AG04450 (cell line): ENCODE measurements at regions of chr4 and their contacts with region 1.

Region 1: GRCh38 chr4:85747882-85748491 is 273.0 kb downstream of the ARHGAP24 start:
- DNase-seq: peak; percentile 50
- H3K4me3 ChIP-seq: no peak overlapping the region
- H3K27ac ChIP-seq: no peak overlapping the region
- H3K27me3 ChIP-seq: no peaks in the 10 kb centered on the region
- CTCF ChIP-seq: peak; percentile 92

Region 2: DNA sequence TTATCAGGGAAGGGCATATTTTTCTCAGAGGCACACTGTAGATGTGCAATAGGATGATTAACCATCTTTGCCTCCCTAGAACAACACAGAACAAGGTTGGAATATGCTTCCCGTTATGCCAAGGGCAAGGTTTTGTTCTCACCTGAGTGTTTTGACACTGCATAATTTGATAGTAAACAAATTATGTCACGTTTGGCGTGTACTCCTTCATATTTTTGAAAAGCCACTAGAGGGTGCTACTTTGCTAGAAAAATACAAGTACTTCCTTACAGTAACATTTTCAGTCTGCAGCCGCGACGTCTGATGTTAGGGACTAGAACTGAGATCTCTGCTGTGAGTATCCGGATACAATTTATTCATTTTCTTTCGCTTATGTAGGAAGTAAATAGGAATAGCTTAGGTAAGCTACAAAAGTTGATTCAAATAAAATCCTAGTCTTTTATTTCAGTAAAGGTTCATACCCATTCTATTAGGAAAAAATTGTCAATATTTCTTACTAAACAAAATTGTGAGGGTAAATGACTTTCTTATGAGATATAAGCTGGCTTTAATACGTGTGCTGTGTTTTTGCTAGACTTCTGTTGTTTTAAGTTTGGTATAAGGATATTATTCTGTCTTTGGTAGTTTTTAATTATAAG is 600.4 kb before region 1 on chr4:
- CTCF ChIA-PET with region 1: interaction called, 86 read pairs
- POLR2A ChIA-PET with region 1: no interaction called
- DNase-seq: peak; percentile 6
- H3K4me3 ChIP-seq: no peak overlapping the region
- H3K27ac ChIP-seq: no peak overlapping the region
- H3K27me3 ChIP-seq: no peaks in the 10 kb centered on the region
- CTCF ChIP-seq: peak; percentile 70

Region 3: GRCh38 chr4:85318415-85318814 is 429.6 kb before region 1 on chr4:
- CTCF ChIA-PET with region 1: no interaction called
- POLR2A ChIA-PET with region 1: no interaction called
- DNase-seq: no peak
- H3K4me3 ChIP-seq: no peak overlapping the region
- H3K27ac ChIP-seq: no peak overlapping the region
- H3K27me3 ChIP-seq: no peaks in the 10 kb centered on the region
- CTCF ChIP-seq: no peak

Region 4: DNA sequence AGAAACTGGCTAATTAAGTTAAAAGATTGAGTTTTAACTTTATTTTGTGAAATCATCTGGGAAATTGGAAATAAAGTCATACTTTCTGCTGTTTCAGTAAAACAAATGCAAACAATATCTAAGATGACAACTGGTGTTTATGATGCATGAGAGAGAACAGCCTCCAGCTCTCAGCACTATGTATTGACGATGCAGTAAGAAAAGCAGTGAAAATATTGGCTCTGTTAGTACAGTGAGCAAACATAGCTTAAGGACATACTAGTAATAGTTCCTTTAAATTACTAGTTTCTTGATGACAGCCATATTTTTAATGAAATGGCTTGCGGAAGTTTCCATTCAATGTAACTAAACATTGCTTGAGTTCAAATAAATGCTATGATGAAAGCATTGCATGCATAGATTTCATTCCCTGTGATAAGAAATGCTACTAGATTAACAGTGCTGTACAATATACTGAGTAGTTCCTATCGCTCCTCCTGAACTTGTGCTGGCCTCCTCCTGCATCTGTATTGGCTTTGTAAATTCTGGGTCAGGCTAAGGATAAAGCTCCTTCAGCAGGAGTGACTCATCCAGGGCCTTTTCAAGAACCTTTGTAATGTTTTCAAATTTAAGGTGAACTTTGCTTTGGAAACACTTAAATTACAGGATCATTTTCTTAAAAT is 261.4 kb before region 1 on chr4:
- CTCF ChIA-PET with region 1: no interaction called
- POLR2A ChIA-PET with region 1: no interaction called
- DNase-seq: no peak
- H3K4me3 ChIP-seq: no peak overlapping the region
- H3K27ac ChIP-seq: no peak overlapping the region
- H3K27me3 ChIP-seq: no peaks in the 10 kb centered on the region
- CTCF ChIP-seq: no peak

Region 5: GRCh38 chr4:85761803-85762528 is 14.0 kb after region 1 on chr4:
- CTCF ChIA-PET with region 1: interaction called, 55 read pairs
- POLR2A ChIA-PET with region 1: no interaction called
- DNase-seq: peak; percentile 52
- H3K4me3 ChIP-seq: peak overlapping the region; percentile 11; the same call in 1 of the 2 replicates
- H3K27ac ChIP-seq: peak overlapping the region; percentile 79
- H3K27me3 ChIP-seq: no peaks in the 10 kb centered on the region
- CTCF ChIP-seq: no peak

Region 6: GRCh38 chr4:85792376-85793232 is 44.6 kb after region 1 on chr4:
- CTCF ChIA-PET with region 1: interaction called, 17 read pairs
- POLR2A ChIA-PET with region 1: no interaction called
- DNase-seq: no peak
- H3K4me3 ChIP-seq: no peak overlapping the region
- H3K27ac ChIP-seq: no peak overlapping the region
- H3K27me3 ChIP-seq: no peaks in the 10 kb centered on the region
- CTCF ChIP-seq: no peak

Region 7: DNA sequence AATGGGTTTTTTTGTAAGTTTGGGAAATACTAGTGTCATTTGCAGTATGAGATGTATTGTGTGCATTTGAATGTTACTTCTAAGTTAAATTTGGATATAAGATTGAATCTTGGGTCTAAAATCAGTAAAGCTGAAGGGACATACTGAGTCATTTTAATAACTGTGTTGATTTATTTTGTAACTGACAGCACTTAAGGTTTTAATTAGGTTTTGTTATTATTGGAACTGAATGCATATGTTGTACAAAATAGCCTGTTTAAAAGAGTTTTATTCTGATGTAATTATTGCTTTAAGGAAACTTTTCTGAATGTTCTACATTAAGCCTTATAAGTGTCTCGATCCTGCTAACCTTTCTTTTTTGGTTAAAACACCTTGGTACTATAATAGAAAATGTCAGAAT is 215.2 kb after region 1 on chr4:
- CTCF ChIA-PET with region 1: interaction called, 29 read pairs
- POLR2A ChIA-PET with region 1: no interaction called
- DNase-seq: no peak
- H3K4me3 ChIP-seq: no peak overlapping the region
- H3K27ac ChIP-seq: no peak overlapping the region
- H3K27me3 ChIP-seq: no peaks in the 10 kb centered on the region
- CTCF ChIP-seq: no peak

Region 8: GRCh38 chr4:86032476-86033022 is 284.6 kb after region 1 on chr4:
- CTCF ChIA-PET with region 1: interaction called, 10 read pairs
- POLR2A ChIA-PET with region 1: no interaction called
- DNase-seq: no peak
- H3K4me3 ChIP-seq: no peak overlapping the region
- H3K27ac ChIP-seq: peak overlapping the region; percentile 57
- H3K27me3 ChIP-seq: no peaks in the 10 kb centered on the region
- CTCF ChIP-seq: no peak